ENCODE measurements at regions of chr10 and their contacts with region 1.

Region 1: GRCh38 chr10:69392481-69393000 is 24.2 kb downstream of the TACR2 start:
- DNase-seq: peak; percentile 89 to 95
- H3K4me3 ChIP-seq: no peak overlapping the region
- H3K27ac ChIP-seq: peak overlapping the region in 2 of 5 donors; percentile 29 to 50
- H3K4me1 ChIP-seq: peaks cover 5 to 33% (median 16%) of the 10 kb centered on the region in 4 donors
- H3K27me3 ChIP-seq: no peaks in the 10 kb centered on the region
- CTCF ChIP-seq: peak in 6 of 7 experiments; percentile 72 to 99 (median 95)
- EP300 ChIP-seq: no peak
- POLR2A ChIP-seq: no peak

Region 2: GRCh38 chr10:69327463-69328379 is 64.8 kb before region 1 on chr10:
- intact Hi-C with region 1: loop called (anchors 10 kb)
- DNase-seq: peak; percentile 77 to 79
- H3K4me3 ChIP-seq: peak overlapping the region; percentile 10 to 29 (median 26)
- H3K27ac ChIP-seq: peak overlapping the region; percentile 77 to 86 (median 84)
- H3K4me1 ChIP-seq: peaks cover 36 to 93% (median 69%) of the 10 kb centered on the region in 4 donors
- H3K27me3 ChIP-seq: no peaks in the 10 kb centered on the region
- CTCF ChIP-seq: no peak
- EP300 ChIP-seq: no peak
- POLR2A ChIP-seq: no peak

Measured in stomach (tissue), 19 donors.